ENCODE measurements at regions of chr3 and their contacts with region 1.

Region 1: DNA sequence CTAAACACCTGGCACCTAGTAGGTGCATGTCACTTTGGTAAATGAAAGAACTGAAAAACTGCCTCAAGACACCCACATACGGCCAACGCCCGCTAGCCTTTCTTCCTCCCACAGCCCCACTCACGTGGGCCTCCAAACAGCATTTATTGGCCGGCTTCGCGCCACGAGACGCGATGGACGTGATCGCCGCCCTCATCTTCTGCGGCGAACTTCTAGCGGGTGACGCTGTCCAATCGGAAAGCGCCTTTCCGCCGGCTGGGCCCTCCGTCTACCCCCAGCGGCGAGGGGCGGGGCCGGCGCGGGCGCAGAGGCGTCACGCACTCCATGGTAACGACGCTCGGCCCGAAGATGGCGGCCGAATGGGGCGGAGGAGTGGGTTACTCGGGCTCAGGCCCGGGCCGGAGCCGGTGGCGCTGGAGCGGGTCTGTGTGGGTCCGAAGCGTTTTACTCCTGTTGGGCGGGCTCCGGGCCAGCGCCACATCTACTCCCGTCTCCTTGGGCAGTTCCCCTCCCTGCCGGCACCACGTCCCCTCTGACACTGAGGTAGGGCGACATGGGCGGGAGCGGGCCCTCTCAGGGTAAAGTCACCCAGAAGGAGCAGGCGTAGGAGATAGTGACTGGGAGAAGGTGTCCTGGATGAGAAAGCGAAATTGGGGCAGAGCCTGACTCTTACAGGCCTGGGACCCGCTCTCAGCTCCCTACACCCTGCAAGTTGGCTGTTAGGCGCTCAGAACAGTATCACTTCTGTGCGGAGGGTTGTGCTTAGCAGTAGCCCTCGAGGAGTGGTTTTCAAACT is at the start of gene LMLN:
- DNase-seq: peak; percentile 97 to 99 (median 97)
- ATAC-seq: peak; percentile 81
- H3K4me3 ChIP-seq: peak within 1 kb of the TSS; percentile 63
- H3K27ac ChIP-seq: peak within 1 kb of the TSS; percentile 91
- H3K4me1 ChIP-seq: peaks cover 30 to 40% of the 10 kb centered on the region in 2 experiments
- H3K27me3 ChIP-seq: no peaks in the 10 kb centered on the region
- CTCF ChIP-seq: 0 out of 6 replicates have a peak, but pooled peaks of 1 of the 3 experiments have one; percentile 0
- EP300 ChIP-seq: peak; percentile 30; the same call in 1 of the 2 replicates
- POLR2A ChIP-seq: peak; percentile 93
- RAD21 ChIP-seq: no peak
- polyA plus RNA-seq, gene LMLN: 2.2 to 2.7 TPM

Region 2: GRCh38 chr3:197736491-197737318 is 223.4 kb before region 1 on chr3 and contains the start of gene RUBCN:
- CTCF ChIA-PET with region 1: no interaction called
- POLR2A ChIA-PET with region 1: interaction called, 3 read pairs
- in situ Hi-C with region 1: no loop called
- intact Hi-C with region 1: loop called (anchors 10 kb)
- DNase-seq: peak; percentile 95 to 98 (median 96)
- ATAC-seq: peak; percentile 97
- H3K4me3 ChIP-seq: peak within 1 kb of the TSS; percentile 90
- H3K27ac ChIP-seq: peak within 1 kb of the TSS; percentile 76
- H3K4me1 ChIP-seq: peaks cover 24 to 25% of the 10 kb centered on the region in 2 experiments
- H3K27me3 ChIP-seq: no peaks in the 10 kb centered on the region
- CTCF ChIP-seq: no peak
- EP300 ChIP-seq: no peak
- POLR2A ChIP-seq: peak; percentile 83
- RAD21 ChIP-seq: no peak
- polyA plus RNA-seq, gene RUBCN: 8.4 to 9.3 TPM

Region 3: GRCh38 chr3:197801891-197802778 is 158.0 kb before region 1 on chr3:
- CTCF ChIA-PET with region 1: no interaction called
- POLR2A ChIA-PET with region 1: no interaction called
- in situ Hi-C with region 1: no loop called
- intact Hi-C with region 1: no loop called
- DNase-seq: peak in 1 of 4 experiments; percentile 46
- ATAC-seq: peak; percentile 60
- H3K4me3 ChIP-seq: no peak overlapping the region
- H3K27ac ChIP-seq: no peak overlapping the region
- H3K4me1 ChIP-seq: peaks cover 7 to 19% of the 10 kb centered on the region in 2 experiments; a peak in 3 of 5 replicates
- H3K27me3 ChIP-seq: no peaks in the 10 kb centered on the region
- CTCF ChIP-seq: peak; percentile 41 to 70 (median 51); a peak in 5 of 6 replicates
- EP300 ChIP-seq: no peak
- POLR2A ChIP-seq: no peak
- RAD21 ChIP-seq: peak; percentile 26 to 57; a peak in 3 of 4 replicates

Region 4: DNA sequence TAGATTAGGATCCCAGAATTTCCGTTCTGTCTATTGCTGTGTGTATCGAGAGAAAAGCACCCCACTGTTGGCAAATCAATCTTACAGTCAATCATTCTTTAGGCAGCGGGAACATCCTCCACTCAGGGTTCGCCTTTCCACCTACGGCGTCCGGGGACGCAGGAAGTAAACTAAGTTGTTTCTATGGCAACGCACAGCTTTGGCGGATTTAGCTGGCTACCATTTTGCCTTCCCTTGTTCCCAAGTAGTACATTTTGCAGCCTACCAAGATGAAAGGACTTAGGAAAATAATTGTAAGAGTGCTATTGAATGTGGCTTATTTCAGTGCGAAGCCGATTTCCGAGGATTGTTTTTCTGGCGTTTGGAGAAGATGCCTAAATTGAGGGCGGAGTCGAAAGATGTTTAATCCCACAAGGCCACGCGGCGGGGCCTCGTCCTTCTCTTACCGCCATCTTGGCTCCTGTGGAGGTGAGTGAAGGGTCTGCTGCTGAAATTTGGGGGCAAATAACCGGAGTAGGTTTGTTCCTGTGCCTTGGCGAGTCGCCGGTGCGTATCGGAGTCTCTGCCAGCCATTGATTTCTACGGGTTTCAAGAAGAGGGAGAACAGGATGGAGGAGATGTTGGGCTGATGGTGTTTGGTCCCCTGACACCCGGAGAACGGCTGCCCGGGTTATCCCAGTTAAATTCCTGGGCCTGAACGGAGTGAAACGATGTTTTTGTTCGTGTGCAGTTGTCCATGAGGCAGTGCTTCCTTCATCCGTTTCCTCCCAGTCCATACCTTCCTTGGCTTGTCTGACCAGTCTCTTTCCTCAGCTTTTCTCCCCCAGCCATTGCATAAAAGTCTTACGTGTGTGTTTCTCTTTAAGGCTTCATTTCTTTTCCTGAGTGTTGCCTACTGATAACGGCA is 10.1 kb before region 1 on chr3 and contains the start of gene RPL35A:
- CTCF ChIA-PET with region 1: no interaction called
- POLR2A ChIA-PET with region 1: interaction called, 16 read pairs
- in situ Hi-C with region 1: no loop called
- intact Hi-C with region 1: loop called (anchors 1 kb)
- DNase-seq: peak; percentile 75 to 95 (median 80)
- ATAC-seq: peak; percentile 82
- H3K4me3 ChIP-seq: peak within 1 kb of the TSS; percentile 86
- H3K27ac ChIP-seq: peak within 1 kb of the TSS; percentile 98
- H3K4me1 ChIP-seq: peaks cover 18 to 22% of the 10 kb centered on the region in 2 experiments; a peak in 4 of 5 replicates
- H3K27me3 ChIP-seq: no peaks in the 10 kb centered on the region
- CTCF ChIP-seq: peak in 1 of 3 experiments; percentile 17; a peak in 1 of 6 replicates
- EP300 ChIP-seq: peak; percentile 66
- POLR2A ChIP-seq: peak; percentile 99
- RAD21 ChIP-seq: no peak
- polyA plus RNA-seq, gene RPL35A: 2,367 to 2,942 TPM

Region 5: GRCh38 chr3:198028718-198029117 is 68.6 kb after region 1 on chr3:
- CTCF ChIA-PET with region 1: no interaction called
- POLR2A ChIA-PET with region 1: no interaction called
- in situ Hi-C with region 1: no loop called
- intact Hi-C with region 1: loop called (anchors 5 kb)
- DNase-seq: peak in 2 of 4 experiments; percentile 11 to 25
- ATAC-seq: peak; percentile 10; the same call in 2 of the 3 replicates
- H3K4me3 ChIP-seq: no peak overlapping the region
- H3K27ac ChIP-seq: peak overlapping the region; percentile 72
- H3K4me1 ChIP-seq: peaks cover 22 to 58% of the 10 kb centered on the region in 2 experiments
- H3K27me3 ChIP-seq: no peaks in the 10 kb centered on the region
- CTCF ChIP-seq: no peak
- EP300 ChIP-seq: no peak
- POLR2A ChIP-seq: no peak
- RAD21 ChIP-seq: no peak

Region 6: GRCh38 chr3:198079771-198080520 is 119.8 kb after region 1 on chr3:
- CTCF ChIA-PET with region 1: no interaction called
- POLR2A ChIA-PET with region 1: interaction called, 7 read pairs
- in situ Hi-C with region 1: no loop called
- intact Hi-C with region 1: loop called (anchors 5 kb)
- DNase-seq: peak; percentile 18 to 78 (median 28)
- ATAC-seq: peak; percentile 84
- H3K4me3 ChIP-seq: peak overlapping the region; percentile 72
- H3K27ac ChIP-seq: peak overlapping the region; percentile 93
- H3K4me1 ChIP-seq: peaks cover 9 to 19% of the 10 kb centered on the region in 2 experiments
- H3K27me3 ChIP-seq: no peaks in the 10 kb centered on the region
- CTCF ChIP-seq: peak; percentile 17 to 76 (median 35); a peak in 3 of 6 replicates
- EP300 ChIP-seq: peak; percentile 40; the same call in 1 of the 2 replicates
- POLR2A ChIP-seq: no peak
- RAD21 ChIP-seq: no peak